Upper lobe of right lung (tissue), 1 donor: ENCODE measurements at regions of chr3 and their contacts with region 1.

Region 1: DNA sequence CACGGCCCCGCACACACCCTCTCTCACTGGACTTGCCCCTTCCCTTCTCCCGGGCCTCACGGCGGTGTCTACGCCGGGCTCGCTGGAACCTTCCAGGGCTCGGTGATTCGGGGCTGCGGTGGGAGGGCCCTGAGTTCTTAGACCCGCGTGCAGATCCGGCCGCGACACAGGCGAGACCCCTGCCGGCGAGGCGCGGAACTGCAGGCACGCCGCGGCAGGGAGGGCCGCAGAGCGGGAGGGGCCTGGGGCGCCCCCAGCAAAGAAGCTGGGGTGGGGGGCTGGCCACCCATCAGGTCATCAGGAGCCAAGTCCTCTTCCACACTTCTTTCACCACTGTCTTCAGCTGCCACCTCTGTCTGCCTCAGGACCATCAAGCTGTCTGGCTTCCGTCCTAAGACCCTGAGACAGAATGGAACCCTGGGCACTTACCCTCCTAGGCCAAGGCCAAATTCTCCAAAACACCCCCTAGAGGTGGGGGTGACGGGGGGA is 164.5 kb downstream of the XXYLT1 start:
- DNase-seq: peak; percentile 85
- ATAC-seq: peak; percentile 91
- H3K4me3 ChIP-seq: peak overlapping the region; percentile 19
- H3K27ac ChIP-seq: no peak overlapping the region
- H3K4me1 ChIP-seq: peaks cover 4% of the 10 kb centered on the region
- H3K27me3 ChIP-seq: no peaks in the 10 kb centered on the region
- CTCF ChIP-seq: peak; percentile 100

Region 2: DNA sequence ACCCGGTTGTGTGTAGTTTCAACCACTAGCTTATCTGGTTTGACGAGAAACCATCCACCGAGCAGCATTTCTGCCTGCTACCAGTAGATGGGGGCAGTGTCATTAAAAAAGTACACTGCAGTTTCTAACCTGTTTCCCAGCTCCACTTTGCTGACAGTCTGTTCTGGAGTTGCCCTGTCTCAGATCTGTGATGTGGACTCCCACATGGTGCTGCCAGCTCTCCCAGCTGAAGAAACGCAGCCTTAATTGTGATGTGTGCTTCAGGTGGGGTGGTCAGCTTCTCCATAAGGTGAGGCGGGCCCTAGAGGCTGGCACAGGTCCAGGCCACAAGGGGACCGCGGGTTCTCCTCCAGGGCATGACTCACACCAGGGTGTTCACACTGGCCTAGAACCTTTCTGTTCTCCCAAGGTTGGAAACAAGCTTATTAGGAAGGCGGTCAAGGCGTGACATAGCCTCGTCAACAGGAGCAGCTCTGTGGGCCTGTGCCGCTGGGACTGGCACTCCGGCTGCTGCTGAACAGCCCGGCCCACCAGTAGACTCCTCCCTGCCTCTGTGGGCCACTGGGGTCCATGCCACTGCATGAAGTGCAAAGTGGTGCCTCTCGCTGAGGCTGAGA is 423.7 kb before region 1 on chr3:
- intact Hi-C with region 1: loop called (anchors 5 kb)
- DNase-seq: peak; percentile 76
- ATAC-seq: peak; percentile 84
- H3K4me3 ChIP-seq: no peak overlapping the region
- H3K27ac ChIP-seq: no peak overlapping the region
- H3K4me1 ChIP-seq: peaks cover 26% of the 10 kb centered on the region
- H3K27me3 ChIP-seq: no peaks in the 10 kb centered on the region
- CTCF ChIP-seq: peak; percentile 87

Region 3: GRCh38 chr3:194773216-194773615 is 333.2 kb before region 1 on chr3:
- intact Hi-C with region 1: no loop called
- DNase-seq: no peak
- ATAC-seq: peak; percentile 12
- H3K4me3 ChIP-seq: no peak overlapping the region
- H3K27ac ChIP-seq: no peak overlapping the region
- H3K4me1 ChIP-seq: peaks cover 18% of the 10 kb centered on the region
- H3K27me3 ChIP-seq: no peaks in the 10 kb centered on the region
- CTCF ChIP-seq: no peak